CD8-positive, alpha-beta T cell (primary cell): ENCODE measurements at regions of chr7 and their contacts with region 1.

Region 1: DNA sequence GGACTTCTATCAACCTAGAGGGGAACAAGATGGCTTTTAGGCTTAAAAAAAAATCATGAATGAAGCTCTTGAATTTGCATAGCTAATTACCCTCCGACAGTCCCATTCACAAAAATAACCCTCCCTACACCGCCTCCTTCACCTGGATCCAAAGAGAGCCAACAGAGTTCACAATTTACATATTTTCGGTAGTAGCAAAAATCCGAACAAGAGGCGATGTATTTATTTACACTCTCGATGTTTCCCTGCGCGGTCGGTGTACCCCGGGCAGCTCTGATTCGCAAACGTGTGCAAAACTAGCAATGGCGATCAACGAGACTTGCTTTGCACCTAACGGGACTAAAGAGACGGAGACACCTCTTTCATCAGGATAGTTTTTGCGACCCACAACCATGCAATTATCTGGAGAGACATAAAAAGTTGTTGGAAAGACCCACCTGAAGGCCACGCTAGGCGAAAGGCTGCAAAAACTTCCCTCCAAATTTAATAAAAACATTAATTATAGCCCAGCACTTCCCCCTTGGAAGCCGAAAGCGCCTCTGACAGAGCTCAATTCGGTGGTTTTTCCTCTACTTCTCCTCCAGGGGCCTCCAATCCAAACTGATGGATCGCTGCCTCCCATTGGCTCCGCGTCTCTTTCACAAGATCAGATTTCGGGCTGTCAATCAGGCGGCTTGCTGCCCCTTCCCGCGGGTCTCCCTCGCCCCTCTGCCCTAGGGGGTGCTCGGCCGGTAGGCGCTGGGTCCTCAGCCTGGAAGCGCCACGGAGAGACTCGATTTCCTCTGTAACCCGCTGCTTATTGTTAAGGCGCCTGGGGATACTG is at the start of gene ETV1:
- DNase-seq: peak in 2 of 9 experiments; percentile 26 to 32
- ATAC-seq: no peak
- H3K4me3 ChIP-seq: peak within 1 kb of the TSS; percentile 56 to 67
- H3K4me3 Mint-ChIP-seq: no peak within 1 kb of the TSS
- H3K27ac ChIP-seq: no peak within 1 kb of the TSS
- H3K27ac Mint-ChIP-seq: no peak within 1 kb of the TSS
- H3K4me1 ChIP-seq: peaks cover 20% of the 10 kb centered on the region
- H3K4me1 Mint-ChIP-seq: no peaks in the 10 kb centered on the region
- H3K27me3 ChIP-seq: peaks cover 9 to 11% of the 10 kb centered on the region in 2 experiments
- H3K27me3 Mint-ChIP-seq: peaks cover 12% of the 10 kb centered on the region
- CTCF ChIP-seq: no peak
- total RNA-seq, gene ETV1: not detected

Region 2: DNA sequence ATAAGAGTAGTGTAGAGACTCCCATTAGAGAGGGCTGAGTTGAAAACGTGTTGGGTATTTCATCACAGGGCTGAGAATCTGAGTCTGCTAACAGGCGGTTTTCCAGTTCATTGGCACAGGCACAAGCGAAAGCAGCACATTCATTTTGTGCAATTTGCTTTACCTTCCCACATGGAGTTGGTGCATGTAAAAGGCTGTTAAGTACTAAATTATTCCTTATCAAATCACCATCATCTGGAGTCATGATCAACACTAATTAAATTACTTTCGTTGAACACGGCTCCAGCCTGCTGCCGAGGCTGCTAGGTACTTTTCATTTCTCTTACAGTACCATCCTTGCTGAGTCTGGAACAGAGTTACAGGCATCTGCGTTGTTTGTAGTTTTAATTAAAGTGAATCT is 43.7 kb before region 1 on chr7:
- CTCF ChIA-PET with region 1: no interaction called
- POLR2A ChIA-PET with region 1: no interaction called
- intact Hi-C with region 1: no loop called
- DNase-seq: no peak
- ATAC-seq: no peak
- H3K4me3 ChIP-seq: no peak overlapping the region
- H3K4me3 Mint-ChIP-seq: no peak overlapping the region
- H3K27ac ChIP-seq: no peak overlapping the region
- H3K27ac Mint-ChIP-seq: no peak overlapping the region
- H3K4me1 ChIP-seq: no peaks in the 10 kb centered on the region
- H3K4me1 Mint-ChIP-seq: no peaks in the 10 kb centered on the region
- H3K27me3 ChIP-seq: no peaks in the 10 kb centered on the region
- H3K27me3 Mint-ChIP-seq: no peaks in the 10 kb centered on the region
- CTCF ChIP-seq: no peak

Region 3: GRCh38 chr7:14000247-14000646 is 10.9 kb after region 1 on chr7:
- CTCF ChIA-PET with region 1: no interaction called
- POLR2A ChIA-PET with region 1: no interaction called
- intact Hi-C with region 1: loop called in 1 of 2 experiments (anchors 1 kb)
- DNase-seq: no peak
- ATAC-seq: no peak
- H3K4me3 ChIP-seq: no peak overlapping the region
- H3K4me3 Mint-ChIP-seq: no peak overlapping the region
- H3K27ac ChIP-seq: no peak overlapping the region
- H3K27ac Mint-ChIP-seq: no peak overlapping the region
- H3K4me1 ChIP-seq: no peaks in the 10 kb centered on the region
- H3K4me1 Mint-ChIP-seq: no peaks in the 10 kb centered on the region
- H3K27me3 ChIP-seq: no peaks in the 10 kb centered on the region
- H3K27me3 Mint-ChIP-seq: no peaks in the 10 kb centered on the region
- CTCF ChIP-seq: no peak

Region 4: DNA sequence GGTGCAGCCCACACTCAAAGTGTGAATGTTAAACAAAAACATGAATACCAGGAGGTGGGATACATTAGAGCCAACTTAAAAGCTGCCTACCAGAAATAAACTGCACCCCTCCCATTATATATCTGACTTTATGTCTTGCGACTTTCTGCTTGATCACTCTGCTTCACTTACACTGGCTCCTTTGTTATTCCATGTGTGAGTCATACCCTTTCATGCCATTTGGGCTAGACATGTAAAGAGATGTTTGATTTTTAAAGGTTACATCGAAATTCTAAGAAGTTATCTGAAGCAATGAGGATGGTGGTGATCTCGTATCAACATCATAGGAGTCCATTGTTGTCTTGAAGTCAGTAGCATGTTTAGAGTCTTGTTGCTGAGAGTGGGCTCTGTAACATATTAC is 31.7 kb after region 1 on chr7:
- CTCF ChIA-PET with region 1: no interaction called
- POLR2A ChIA-PET with region 1: no interaction called
- intact Hi-C with region 1: loop called in 1 of 2 experiments (anchors 5 kb)
- DNase-seq: no peak
- ATAC-seq: no peak
- H3K4me3 ChIP-seq: no peak overlapping the region
- H3K4me3 Mint-ChIP-seq: no peak overlapping the region
- H3K27ac ChIP-seq: no peak overlapping the region
- H3K27ac Mint-ChIP-seq: no peak overlapping the region
- H3K4me1 ChIP-seq: no peaks in the 10 kb centered on the region
- H3K4me1 Mint-ChIP-seq: no peaks in the 10 kb centered on the region
- H3K27me3 ChIP-seq: no peaks in the 10 kb centered on the region
- H3K27me3 Mint-ChIP-seq: no peaks in the 10 kb centered on the region
- CTCF ChIP-seq: no peak

Region 5: GRCh38 chr7:14065286-14065685 is 75.9 kb after region 1 on chr7:
- CTCF ChIA-PET with region 1: no interaction called
- POLR2A ChIA-PET with region 1: no interaction called
- intact Hi-C with region 1: no loop called
- DNase-seq: no peak
- ATAC-seq: no peak
- H3K4me3 ChIP-seq: no peak overlapping the region
- H3K4me3 Mint-ChIP-seq: no peak overlapping the region
- H3K27ac ChIP-seq: no peak overlapping the region
- H3K27ac Mint-ChIP-seq: no peak overlapping the region
- H3K4me1 ChIP-seq: no peaks in the 10 kb centered on the region
- H3K4me1 Mint-ChIP-seq: no peaks in the 10 kb centered on the region
- H3K27me3 ChIP-seq: no peaks in the 10 kb centered on the region
- H3K27me3 Mint-ChIP-seq: no peaks in the 10 kb centered on the region
- CTCF ChIP-seq: no peak